ENCODE measurements at regions of chr3 and their contacts with region 1.

Region 1: DNA sequence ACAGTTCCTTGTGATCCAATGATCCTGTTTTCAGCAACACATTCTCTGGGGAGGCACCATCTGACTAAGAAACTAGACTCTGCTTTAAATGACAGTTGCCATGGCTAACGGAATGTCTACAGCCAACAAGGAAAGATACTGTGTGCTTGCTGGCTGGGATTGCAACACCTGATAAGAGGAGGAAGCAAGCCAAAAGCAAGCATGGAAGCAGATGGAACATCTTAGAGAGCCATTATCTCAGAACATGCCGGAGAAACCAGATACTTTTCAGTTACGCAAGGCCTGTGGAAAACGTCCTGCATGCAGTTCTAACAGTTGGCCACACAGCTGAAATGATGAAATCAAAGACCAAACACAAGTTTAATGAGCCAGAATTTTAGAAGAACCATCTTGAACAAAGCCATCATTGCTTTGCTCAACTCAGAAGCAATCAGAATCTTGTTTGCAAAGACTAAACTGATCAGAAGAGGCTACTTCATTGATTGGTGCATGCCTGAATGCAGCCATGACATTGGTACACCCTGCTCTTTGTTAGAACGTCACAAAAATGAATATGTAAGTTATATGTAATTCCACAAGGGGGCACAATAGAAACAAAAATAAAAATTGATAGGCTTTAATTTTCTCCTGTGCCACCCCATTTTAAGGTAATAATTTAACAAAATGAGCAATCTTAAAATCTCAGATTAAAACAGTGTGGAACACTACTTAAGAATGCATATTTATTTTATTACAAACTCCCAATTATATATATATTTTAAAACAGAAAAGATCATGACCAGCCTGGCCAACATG is 50.8 kb downstream of the GXYLT2 start:
- DNase-seq: peak in 2 of 3 donors; percentile 50 to 77
- ATAC-seq: peak; percentile 96
- H3K4me3 ChIP-seq: no peak overlapping the region
- H3K27ac ChIP-seq: peak overlapping the region; percentile 60
- H3K4me1 ChIP-seq: no peaks in the 10 kb centered on the region
- H3K27me3 ChIP-seq: no peaks in the 10 kb centered on the region

Region 2: GRCh38 chr3:72887705-72888545 is 50.7 kb before region 1 on chr3 and contains the start of gene GXYLT2:
- intact Hi-C with region 1: loop called in 1 of 4 experiments (anchors 5 kb)
- DNase-seq: peak; percentile 76 to 88 (median 86)
- ATAC-seq: peak; percentile 84 to 88
- H3K4me3 ChIP-seq: peak within 1 kb of the TSS; percentile 95
- H3K27ac ChIP-seq: peak within 1 kb of the TSS; percentile 79
- H3K4me1 ChIP-seq: peaks cover 8% of the 10 kb centered on the region
- H3K27me3 ChIP-seq: no peaks in the 10 kb centered on the region
- total RNA-seq, gene GXYLT2: 34.8 to 50.7 (median 38.4) TPM

Region 3: GRCh38 chr3:73056014-73056844 is 117.6 kb after region 1 on chr3:
- intact Hi-C with region 1: loop called (anchors 5 to 10 kb)
- DNase-seq: no peak
- ATAC-seq: peak in 1 of 2 donors; percentile 52
- H3K4me3 ChIP-seq: no peak overlapping the region
- H3K27ac ChIP-seq: no peak overlapping the region
- H3K4me1 ChIP-seq: no peaks in the 10 kb centered on the region
- H3K27me3 ChIP-seq: no peaks in the 10 kb centered on the region

Measured in right cardiac atrium (tissue), 5 donors.